PC-9 (cell line): ENCODE measurements at regions of chr14 and their contacts with region 1.

Region 1: GRCh38 chr14:35653045-35653444 is 119.1 kb downstream of the INSM2 start:
- DNase-seq: no peak
- H3K4me3 ChIP-seq: no peak overlapping the region
- H3K27ac ChIP-seq: no peak overlapping the region
- H3K4me1 ChIP-seq: no peaks in the 10 kb centered on the region
- H3K27me3 ChIP-seq: no peaks in the 10 kb centered on the region
- CTCF ChIP-seq: no peak

Region 2: DNA sequence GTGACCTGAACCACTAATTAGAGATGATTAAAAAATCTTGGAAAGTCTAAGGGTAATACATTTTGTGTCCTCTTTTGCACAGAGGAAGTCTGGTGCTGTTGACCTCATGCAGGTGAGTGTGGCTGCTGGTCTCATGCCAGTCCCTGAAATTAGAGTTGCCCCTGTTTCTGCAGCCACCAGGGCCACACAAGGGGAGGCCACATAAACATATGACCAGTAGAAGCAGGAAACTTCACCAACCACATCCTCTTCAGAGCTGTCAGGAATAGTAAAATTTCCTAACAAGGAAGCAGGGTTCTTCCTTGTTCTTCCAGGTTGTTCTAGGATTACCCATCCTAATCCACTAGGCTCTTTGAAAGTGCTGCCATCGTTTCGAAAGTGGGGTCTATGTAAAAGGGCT is 332.6 kb before region 1 on chr14:
- CTCF ChIA-PET with region 1: no interaction called
- POLR2A ChIA-PET with region 1: interaction called, 10 read pairs
- intact Hi-C with region 1: no loop called
- DNase-seq: no peak
- H3K4me3 ChIP-seq: no peak overlapping the region
- H3K27ac ChIP-seq: no peak overlapping the region
- H3K4me1 ChIP-seq: no peaks in the 10 kb centered on the region
- H3K27me3 ChIP-seq: no peaks in the 10 kb centered on the region
- CTCF ChIP-seq: no peak

Region 3: DNA sequence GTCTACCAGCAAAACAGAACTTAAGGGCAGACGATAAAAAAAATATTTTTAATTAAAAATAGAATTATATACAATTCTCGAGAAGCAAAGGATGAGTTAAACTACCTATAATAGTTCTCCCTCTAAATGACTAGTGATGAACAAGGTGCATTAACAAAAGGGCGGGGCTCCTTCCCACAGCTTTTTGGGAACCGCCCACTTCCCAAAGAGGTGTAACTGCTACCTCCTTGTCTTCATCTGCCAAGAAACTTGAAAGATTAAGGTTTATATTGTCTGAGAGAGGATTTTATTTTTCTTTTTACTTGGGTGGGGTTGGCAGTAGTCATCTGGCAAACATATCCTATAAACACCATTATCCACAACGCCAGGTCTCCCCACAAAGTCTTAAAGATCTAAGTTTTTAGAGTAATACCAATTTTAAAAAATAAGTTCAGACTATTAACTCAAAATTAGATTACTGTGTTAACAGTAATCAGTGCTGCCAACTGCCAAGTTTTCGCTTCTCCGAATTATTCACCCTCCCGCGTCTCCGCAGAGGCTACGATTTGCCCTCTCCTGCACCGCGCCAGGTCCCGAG is 155.1 kb after region 1 on chr14:
- CTCF ChIA-PET with region 1: no interaction called
- POLR2A ChIA-PET with region 1: no interaction called
- intact Hi-C with region 1: no loop called
- DNase-seq: peak; percentile 21 to 36
- H3K4me3 ChIP-seq: peak overlapping the region; percentile 81
- H3K27ac ChIP-seq: peak overlapping the region; percentile 65
- H3K4me1 ChIP-seq: peaks cover 9% of the 10 kb centered on the region; the same call in 1 of the 2 replicates
- H3K27me3 ChIP-seq: no peaks in the 10 kb centered on the region
- CTCF ChIP-seq: no peak